Stomach (tissue), 19 donors: ENCODE measurements at regions of chr11 and their contacts with region 1.

Region 1: GRCh38 chr11:30128269-30128932 is 102.4 kb upstream of the FSHB start:
- DNase-seq: peak in 1 of 2 donors; percentile 65
- H3K4me3 ChIP-seq: no peak overlapping the region
- H3K27ac ChIP-seq: no peak overlapping the region
- H3K4me1 ChIP-seq: peaks cover 0 to 8% (median 3%) of the 10 kb centered on the region in 4 donors
- H3K27me3 ChIP-seq: no peaks in the 10 kb centered on the region
- CTCF ChIP-seq: peak in 4 of 7 experiments; percentile 43 to 57 (median 52)
- EP300 ChIP-seq: no peak
- POLR2A ChIP-seq: no peak

Region 2: GRCh38 chr11:30206249-30206996 is 78.0 kb after region 1 on chr11:
- intact Hi-C with region 1: loop called (anchors 10 kb)
- DNase-seq: no peak
- H3K4me3 ChIP-seq: no peak overlapping the region
- H3K27ac ChIP-seq: no peak overlapping the region
- H3K4me1 ChIP-seq: no peaks in the 10 kb centered on the region
- H3K27me3 ChIP-seq: no peaks in the 10 kb centered on the region
- CTCF ChIP-seq: no peak
- EP300 ChIP-seq: no peak
- POLR2A ChIP-seq: no peak

Region 3: DNA sequence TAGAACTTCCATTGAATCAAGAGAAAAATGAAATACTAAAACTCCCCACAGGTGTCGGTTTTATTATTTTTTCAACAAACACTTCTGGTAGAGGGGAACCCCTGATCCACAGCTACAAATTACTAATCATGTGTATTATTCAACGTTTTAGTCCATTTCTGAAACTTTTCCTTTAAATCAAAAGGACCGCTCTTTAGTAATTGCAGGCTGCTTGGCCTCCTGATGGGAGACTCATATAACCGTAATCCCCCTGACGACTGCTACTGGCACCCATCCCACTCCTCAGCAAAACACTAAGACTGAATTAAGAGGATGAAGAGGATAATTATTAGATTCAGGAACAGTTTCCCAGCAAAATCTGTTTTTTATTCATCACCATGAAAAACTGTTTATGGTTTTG is 1636.4 kb after region 1 on chr11:
- intact Hi-C with region 1: no loop called
- DNase-seq: no peak
- H3K4me3 ChIP-seq: no peak overlapping the region
- H3K27ac ChIP-seq: no peak overlapping the region
- H3K4me1 ChIP-seq: no peaks in the 10 kb centered on the region
- H3K27me3 ChIP-seq: no peaks in the 10 kb centered on the region
- CTCF ChIP-seq: no peak
- EP300 ChIP-seq: no peak
- POLR2A ChIP-seq: no peak